Activated naive CD4-positive, alpha-beta T cell treated with anti-CD3 and anti-CD28 coated beads for 36 hours (primary cell): ENCODE measurements at regions of chr13 and their contacts with region 1.

Region 1: DNA sequence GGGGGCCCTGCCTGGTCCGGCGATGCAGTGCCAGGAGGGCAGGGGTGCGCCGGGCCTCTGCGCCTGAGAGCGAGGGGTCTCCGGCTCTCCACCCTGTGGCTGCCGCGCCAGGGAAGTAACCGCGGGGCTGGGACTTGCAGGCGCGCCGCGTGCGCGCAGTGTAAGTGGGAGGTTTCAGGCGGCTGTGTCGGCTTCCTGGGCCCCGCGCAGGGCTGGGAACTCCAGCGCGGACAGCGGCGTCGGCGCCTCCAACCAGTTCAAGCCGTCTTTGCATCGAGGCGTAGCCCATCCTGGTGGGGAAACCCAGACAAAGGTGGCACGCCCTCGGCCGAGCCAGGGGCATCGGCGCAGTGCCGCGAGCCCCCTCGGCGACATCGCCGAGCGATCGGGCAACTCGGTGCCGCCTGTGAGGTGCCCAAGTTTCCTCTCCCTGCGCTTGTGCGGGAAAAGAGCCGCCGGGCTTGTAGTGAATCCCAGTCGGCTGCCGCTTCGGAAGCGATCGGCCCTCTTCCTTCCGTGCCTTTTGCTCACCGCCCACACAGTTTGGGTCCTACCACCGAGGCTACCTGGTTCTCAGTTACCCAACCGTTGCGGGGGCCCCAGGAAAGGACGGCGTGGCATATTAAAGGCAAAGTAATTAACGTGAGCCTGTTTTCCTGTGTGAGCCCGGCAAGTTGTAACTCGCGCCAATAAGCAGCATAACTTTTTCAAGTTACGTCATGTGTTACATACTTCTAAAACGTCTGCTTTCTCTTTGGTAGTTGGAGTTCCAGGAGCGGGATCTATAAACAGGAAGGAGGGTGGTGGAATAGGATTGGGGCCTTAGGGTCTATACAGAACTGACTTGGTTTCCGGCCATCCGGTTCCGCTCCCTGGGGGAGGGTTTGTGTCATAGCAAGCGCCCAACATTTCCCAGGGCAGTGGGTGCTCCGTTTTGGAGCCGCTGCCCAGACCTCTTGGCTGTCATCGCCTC is 1.2 kb downstream of the LRCH1 start:
- DNase-seq: peak; percentile 79
- H3K4me3 Mint-ChIP-seq: peak overlapping the region; percentile 91
- H3K27ac Mint-ChIP-seq: peak overlapping the region; percentile 86
- H3K4me1 Mint-ChIP-seq: peaks cover 40% of the 10 kb centered on the region
- H3K27me3 Mint-ChIP-seq: no peaks in the 10 kb centered on the region

Region 2: DNA sequence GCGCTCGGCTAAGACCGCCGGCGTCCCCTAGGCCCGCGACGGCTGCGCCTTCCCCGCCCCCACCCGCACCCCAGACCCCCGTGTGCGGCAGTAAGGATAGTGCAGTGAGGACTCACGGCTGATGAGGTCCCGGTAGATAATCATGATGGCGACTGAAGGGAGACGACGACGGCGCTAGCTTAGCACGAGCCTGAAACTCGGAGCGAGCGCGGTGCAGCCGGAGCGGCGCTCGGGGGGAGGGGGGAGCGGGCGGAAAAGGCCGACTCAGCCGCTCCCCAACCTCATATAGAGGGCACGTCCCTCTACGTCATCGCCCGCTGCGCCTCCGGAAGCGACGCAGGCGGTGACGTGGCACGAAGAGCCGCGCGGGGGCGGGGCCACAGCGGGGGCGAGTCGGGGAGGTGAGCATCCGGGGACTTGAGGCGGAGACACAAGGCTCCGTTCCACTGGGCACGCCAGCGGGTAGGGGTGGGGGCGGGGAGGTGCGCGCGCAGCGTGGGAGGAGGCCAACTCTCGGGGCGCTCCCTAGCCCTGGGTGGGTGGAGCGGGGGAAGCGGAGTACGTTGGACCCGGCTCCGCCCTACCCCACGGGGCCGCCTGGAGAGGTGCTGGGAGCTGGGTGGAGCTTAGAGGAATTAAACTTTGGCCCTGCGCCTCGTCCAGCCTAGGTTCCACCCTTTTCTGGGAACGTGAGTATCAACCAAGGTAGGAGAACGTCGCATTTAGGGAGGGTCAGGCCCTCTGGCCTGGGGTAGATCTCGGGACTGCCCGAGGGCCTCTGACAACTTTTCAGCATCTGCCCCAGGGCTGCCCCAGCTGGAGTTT is 1213.0 kb before region 1 on chr13 and contains the start of gene TPT1:
- CTCF ChIA-PET with region 1: no interaction called
- intact Hi-C with region 1: loop called (anchors 5 kb)
- DNase-seq: peak; percentile 100
- H3K4me3 Mint-ChIP-seq: peak within 1 kb of the TSS; percentile 91
- H3K27ac Mint-ChIP-seq: peak within 1 kb of the TSS; percentile 99
- H3K4me1 Mint-ChIP-seq: peaks cover 43% of the 10 kb centered on the region
- H3K27me3 Mint-ChIP-seq: no peaks in the 10 kb centered on the region
- total RNA-seq, gene TPT1: 3,331 to 3,631 TPM

Region 3: GRCh38 chr13:46321494-46322225 is 232.5 kb before region 1 on chr13:
- CTCF ChIA-PET with region 1: no interaction called
- intact Hi-C with region 1: no loop called
- DNase-seq: peak; percentile 89
- H3K4me3 Mint-ChIP-seq: peak overlapping the region; percentile 81
- H3K27ac Mint-ChIP-seq: peak overlapping the region; percentile 93
- H3K4me1 Mint-ChIP-seq: peaks cover 36% of the 10 kb centered on the region
- H3K27me3 Mint-ChIP-seq: no peaks in the 10 kb centered on the region

Region 4: DNA sequence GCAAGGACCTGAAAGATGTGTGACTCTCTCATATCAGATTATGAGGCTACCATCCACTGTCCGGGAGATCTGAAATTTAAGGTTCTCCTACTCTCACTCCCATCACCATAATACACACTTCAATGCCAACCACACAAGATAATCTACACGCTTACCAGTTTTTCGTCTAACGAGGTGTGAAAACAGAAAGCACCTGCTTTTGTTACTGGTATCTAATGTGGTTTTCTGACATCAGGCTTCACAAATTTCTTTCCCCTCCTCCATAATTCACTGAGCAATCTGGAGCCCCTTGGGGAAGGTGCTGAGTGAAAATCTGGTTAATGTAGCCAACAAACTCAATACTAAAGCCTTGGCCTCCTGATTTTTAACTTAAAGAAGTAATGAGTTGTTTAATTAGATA is 11.3 kb before region 1 on chr13:
- CTCF ChIA-PET with region 1: interaction called, 11 read pairs
- intact Hi-C with region 1: no loop called
- DNase-seq: no peak
- H3K4me3 Mint-ChIP-seq: no peak overlapping the region
- H3K27ac Mint-ChIP-seq: no peak overlapping the region
- H3K4me1 Mint-ChIP-seq: peaks cover 3% of the 10 kb centered on the region
- H3K27me3 Mint-ChIP-seq: no peaks in the 10 kb centered on the region

Region 5: GRCh38 chr13:46603165-46603603 is 49.0 kb after region 1 on chr13:
- CTCF ChIA-PET with region 1: interaction called, 4 read pairs
- intact Hi-C with region 1: loop called (anchors 1 kb)
- DNase-seq: no peak
- H3K4me3 Mint-ChIP-seq: no peak overlapping the region
- H3K27ac Mint-ChIP-seq: no peak overlapping the region
- H3K4me1 Mint-ChIP-seq: peaks cover 78% of the 10 kb centered on the region
- H3K27me3 Mint-ChIP-seq: no peaks in the 10 kb centered on the region

Region 6: GRCh38 chr13:46668302-46668720 is 114.1 kb after region 1 on chr13:
- CTCF ChIA-PET with region 1: interaction called, 12 read pairs
- intact Hi-C with region 1: loop called (anchors 1 kb)
- DNase-seq: peak; percentile 58
- H3K4me3 Mint-ChIP-seq: peak overlapping the region; percentile 72
- H3K27ac Mint-ChIP-seq: peak overlapping the region; percentile 85
- H3K4me1 Mint-ChIP-seq: peaks cover 37% of the 10 kb centered on the region
- H3K27me3 Mint-ChIP-seq: no peaks in the 10 kb centered on the region

Region 7: GRCh38 chr13:46751811-46752635 is 197.9 kb after region 1 on chr13:
- CTCF ChIA-PET with region 1: interaction called, 3 read pairs
- intact Hi-C with region 1: loop called (anchors 1 kb)
- DNase-seq: peak; percentile 74
- H3K4me3 Mint-ChIP-seq: no peak overlapping the region
- H3K27ac Mint-ChIP-seq: peak overlapping the region; percentile 57
- H3K4me1 Mint-ChIP-seq: peaks cover 14% of the 10 kb centered on the region
- H3K27me3 Mint-ChIP-seq: no peaks in the 10 kb centered on the region

Region 8: GRCh38 chr13:46866150-46866549 is 312.0 kb after region 1 on chr13:
- CTCF ChIA-PET with region 1: no interaction called
- intact Hi-C with region 1: no loop called
- DNase-seq: peak; percentile 12
- H3K4me3 Mint-ChIP-seq: no peak overlapping the region
- H3K27ac Mint-ChIP-seq: no peak overlapping the region
- H3K4me1 Mint-ChIP-seq: no peaks in the 10 kb centered on the region
- H3K27me3 Mint-ChIP-seq: peaks cover 7% of the 10 kb centered on the region